WTC11 (cell line): ENCODE measurements at regions of chr7 and their contacts with region 1.

Region 1: GRCh38 chr7:156764016-156764669 is 123.6 kb downstream of the RNF32 start:
- DNase-seq: peak; percentile 56
- ATAC-seq: peak; percentile 97
- H3K4me3 Mint-ChIP-seq: no peak overlapping the region
- H3K27ac Mint-ChIP-seq: no peak overlapping the region
- H3K4me1 Mint-ChIP-seq: peaks cover 3% of the 10 kb centered on the region
- H3K27me3 Mint-ChIP-seq: no peaks in the 10 kb centered on the region
- CTCF ChIP-seq: no peak

Region 2: GRCh38 chr7:156650042-156650441 is 114.1 kb before region 1 on chr7:
- CTCF ChIA-PET with region 1: interaction called, 11 read pairs
- POLR2A ChIA-PET with region 1: no interaction called
- DNase-seq: peak; percentile 68
- ATAC-seq: peak; percentile 96
- H3K4me3 Mint-ChIP-seq: no peak overlapping the region
- H3K27ac Mint-ChIP-seq: no peak overlapping the region
- H3K4me1 Mint-ChIP-seq: peaks cover 14% of the 10 kb centered on the region
- H3K27me3 Mint-ChIP-seq: no peaks in the 10 kb centered on the region
- CTCF ChIP-seq: no peak

Region 3: GRCh38 chr7:156778201-156778600 is 14.1 kb after region 1 on chr7:
- CTCF ChIA-PET with region 1: interaction called, 13 read pairs
- POLR2A ChIA-PET with region 1: no interaction called
- DNase-seq: no peak
- ATAC-seq: no peak
- H3K4me3 Mint-ChIP-seq: no peak overlapping the region
- H3K27ac Mint-ChIP-seq: no peak overlapping the region
- H3K4me1 Mint-ChIP-seq: peaks cover 3% of the 10 kb centered on the region; the same call in 1 of the 2 replicates
- H3K27me3 Mint-ChIP-seq: no peaks in the 10 kb centered on the region
- CTCF ChIP-seq: no peak

Region 4: DNA sequence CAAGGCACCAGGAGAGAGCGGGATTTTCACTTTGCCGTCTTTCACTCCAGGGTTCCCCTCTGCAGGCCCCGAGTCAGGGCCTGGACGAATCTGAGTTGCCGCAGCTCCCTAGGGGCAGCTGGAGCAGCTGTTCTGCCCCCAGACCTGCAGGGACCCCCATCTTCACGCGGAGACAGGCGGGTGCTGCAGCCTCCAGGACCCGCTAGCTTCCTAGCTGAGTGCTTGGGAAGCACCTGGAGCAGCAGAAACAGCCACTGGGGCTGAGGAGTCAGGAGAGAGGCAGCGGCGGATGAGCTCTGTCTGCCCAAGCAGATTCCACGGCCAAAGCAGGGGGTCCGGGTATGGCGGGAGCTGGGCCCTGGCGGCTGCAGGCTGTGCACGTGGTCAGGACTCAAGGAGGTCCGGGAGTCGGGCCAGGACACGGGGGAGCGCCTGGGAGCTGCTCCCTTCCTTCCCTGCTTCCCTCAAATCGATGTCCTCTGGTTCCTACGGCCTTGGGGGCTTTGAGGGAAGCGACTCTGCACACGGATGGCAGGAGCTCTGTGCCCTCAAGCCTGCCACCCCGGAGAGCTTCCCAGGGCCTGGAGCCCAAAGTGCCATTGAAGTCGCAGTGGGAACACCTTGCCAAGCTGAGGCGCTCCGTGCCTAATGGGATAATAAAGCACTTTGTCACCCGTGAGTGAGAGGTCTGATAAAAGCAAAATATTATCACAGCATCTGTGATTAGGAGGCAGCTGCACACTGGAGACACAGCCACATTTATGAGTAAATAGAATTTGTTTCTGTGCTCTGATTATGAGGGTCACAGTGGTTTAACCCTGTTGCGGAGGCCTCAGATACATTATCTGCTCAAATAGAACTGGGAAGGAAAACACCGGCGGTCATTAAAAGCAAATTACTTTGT is 229.1 kb after region 1 on chr7:
- CTCF ChIA-PET with region 1: no interaction called
- POLR2A ChIA-PET with region 1: no interaction called
- DNase-seq: no peak
- ATAC-seq: peak; percentile 48
- H3K4me3 Mint-ChIP-seq: no peak overlapping the region
- H3K27ac Mint-ChIP-seq: no peak overlapping the region
- H3K4me1 Mint-ChIP-seq: peaks cover 4% of the 10 kb centered on the region; the same call in 1 of the 2 replicates
- H3K27me3 Mint-ChIP-seq: peaks cover 47% of the 10 kb centered on the region
- CTCF ChIP-seq: no peak